ENCODE measurements at regions of chr1 and their contacts with region 1.

Region 1: GRCh38 chr1:40774266-40774998 is 9.2 kb upstream of the KCNQ4 start:
- DNase-seq: peak; percentile 37
- H3K4me3 ChIP-seq: no peak overlapping the region
- H3K27ac ChIP-seq: no peak overlapping the region
- H3K4me1 ChIP-seq: no peaks in the 10 kb centered on the region
- H3K27me3 ChIP-seq: no peaks in the 10 kb centered on the region
- CTCF ChIP-seq: peak; percentile 72 to 85
- POLR2A ChIP-seq: no peak

Region 2: GRCh38 chr1:40612345-40612831 is 162.0 kb before region 1 on chr1:
- CTCF ChIA-PET with region 1: interaction called, 3 read pairs
- POLR2A ChIA-PET with region 1: no interaction called
- dilution Hi-C with region 1: no loop called
- intact Hi-C with region 1: loop called (anchors 5 kb)
- DNase-seq: peak; percentile 71
- H3K4me3 ChIP-seq: no peak overlapping the region
- H3K27ac ChIP-seq: no peak overlapping the region
- H3K4me1 ChIP-seq: no peaks in the 10 kb centered on the region
- H3K27me3 ChIP-seq: peaks cover 1 to 11% of the 10 kb centered on the region in 2 experiments
- CTCF ChIP-seq: peak; percentile 75 to 81
- POLR2A ChIP-seq: no peak

Region 3: DNA sequence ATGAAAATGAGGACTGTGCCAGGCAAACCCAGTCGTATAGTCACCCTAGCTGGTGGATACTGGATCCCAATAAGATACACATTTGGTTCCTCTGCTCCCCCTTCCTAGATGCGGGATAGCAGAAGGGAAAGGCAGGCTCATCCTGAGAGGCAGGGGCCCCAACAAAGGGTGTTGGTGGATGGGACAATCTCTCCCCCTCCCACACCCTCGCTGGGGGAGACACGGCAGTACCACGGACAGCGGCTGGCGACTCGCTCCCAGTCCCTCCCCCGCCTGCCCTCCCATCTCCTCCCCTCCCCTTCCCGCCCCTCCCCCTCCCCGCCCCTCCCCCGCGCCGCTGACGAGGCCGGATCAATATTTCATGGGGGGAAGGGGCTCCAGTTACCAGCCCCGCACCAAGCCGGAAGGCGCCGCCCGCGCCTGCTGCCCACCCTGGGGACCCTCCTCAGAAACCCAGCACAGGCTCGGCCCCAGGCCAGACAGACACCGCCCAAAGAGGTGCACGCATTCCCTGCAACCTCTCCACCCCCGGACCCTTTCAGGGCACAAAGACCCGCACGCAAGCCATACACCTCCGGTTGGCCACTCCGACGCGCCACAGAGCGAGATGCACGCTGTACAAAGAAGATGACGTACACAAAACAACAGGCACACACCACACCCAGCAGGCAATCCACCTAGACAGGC is 120.4 kb before region 1 on chr1:
- CTCF ChIA-PET with region 1: no interaction called
- POLR2A ChIA-PET with region 1: no interaction called
- dilution Hi-C with region 1: no loop called
- intact Hi-C with region 1: no loop called
- DNase-seq: no peak
- H3K4me3 ChIP-seq: no peak overlapping the region
- H3K27ac ChIP-seq: no peak overlapping the region
- H3K4me1 ChIP-seq: no peaks in the 10 kb centered on the region
- H3K27me3 ChIP-seq: peaks cover 3 to 22% of the 10 kb centered on the region in 2 experiments
- CTCF ChIP-seq: no peak
- POLR2A ChIP-seq: no peak

Region 4: GRCh38 chr1:40745176-40745575 is 29.3 kb before region 1 on chr1:
- CTCF ChIA-PET with region 1: interaction called, 14 read pairs
- POLR2A ChIA-PET with region 1: no interaction called
- dilution Hi-C with region 1: no loop called
- intact Hi-C with region 1: no loop called
- DNase-seq: no peak
- H3K4me3 ChIP-seq: no peak overlapping the region
- H3K27ac ChIP-seq: no peak overlapping the region
- H3K4me1 ChIP-seq: no peaks in the 10 kb centered on the region
- H3K27me3 ChIP-seq: no peaks in the 10 kb centered on the region
- CTCF ChIP-seq: no peak
- POLR2A ChIP-seq: no peak

Region 5: DNA sequence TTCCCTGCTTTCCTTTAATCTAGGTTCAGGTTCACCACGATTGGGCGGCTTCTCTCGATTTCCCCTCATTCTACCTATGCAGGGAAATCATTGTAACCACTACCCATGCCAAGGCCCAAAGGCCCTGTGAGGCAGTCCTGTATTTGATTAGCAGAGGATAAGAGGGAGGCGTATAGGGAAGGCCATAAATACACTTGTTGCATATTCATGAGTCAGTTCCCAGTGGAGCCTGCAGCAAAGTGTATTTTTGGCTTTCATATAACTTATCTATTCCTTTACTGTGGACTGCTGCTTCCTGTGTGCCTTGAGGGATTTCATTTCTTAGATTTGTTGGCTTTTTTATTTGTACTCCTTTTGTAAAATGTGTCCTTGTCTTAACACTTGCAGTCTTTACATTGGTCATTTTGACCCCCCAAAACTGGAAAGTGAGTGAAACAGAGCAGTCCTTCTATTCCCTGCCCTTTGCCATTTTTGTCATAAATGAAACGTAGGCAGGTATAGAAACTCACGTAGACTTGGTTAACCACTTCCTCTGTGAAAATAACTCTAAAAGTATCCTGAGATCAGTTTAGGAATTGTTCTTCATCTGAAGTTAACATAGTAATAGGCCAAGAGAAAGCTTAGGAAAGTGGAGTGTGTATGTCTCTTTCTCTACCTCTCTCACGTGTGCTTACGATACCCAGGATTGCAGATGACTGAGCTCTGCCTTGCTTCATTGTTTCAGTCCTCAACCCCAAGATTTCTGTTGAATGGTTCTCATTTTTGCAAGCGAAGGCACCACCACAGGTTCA is 10.5 kb before region 1 on chr1:
- CTCF ChIA-PET with region 1: interaction called, 53 read pairs
- POLR2A ChIA-PET with region 1: no interaction called
- dilution Hi-C with region 1: no loop called
- intact Hi-C with region 1: no loop called
- DNase-seq: no peak
- H3K4me3 ChIP-seq: no peak overlapping the region
- H3K27ac ChIP-seq: no peak overlapping the region
- H3K4me1 ChIP-seq: no peaks in the 10 kb centered on the region
- H3K27me3 ChIP-seq: no peaks in the 10 kb centered on the region
- CTCF ChIP-seq: no peak
- POLR2A ChIP-seq: no peak

Region 6: GRCh38 chr1:40799351-40799867 is 25.0 kb after region 1 on chr1:
- CTCF ChIA-PET with region 1: interaction called, 21 read pairs
- POLR2A ChIA-PET with region 1: no interaction called
- dilution Hi-C with region 1: no loop called
- intact Hi-C with region 1: no loop called
- DNase-seq: peak; percentile 16
- H3K4me3 ChIP-seq: no peak overlapping the region
- H3K27ac ChIP-seq: no peak overlapping the region
- H3K4me1 ChIP-seq: peaks cover 14% of the 10 kb centered on the region
- H3K27me3 ChIP-seq: no peaks in the 10 kb centered on the region
- CTCF ChIP-seq: no peak
- POLR2A ChIP-seq: no peak

Region 7: GRCh38 chr1:40849801-40850592 is 75.6 kb after region 1 on chr1:
- CTCF ChIA-PET with region 1: interaction called, 58 read pairs
- POLR2A ChIA-PET with region 1: no interaction called
- dilution Hi-C with region 1: no loop called
- intact Hi-C with region 1: loop called (anchors 1 kb)
- DNase-seq: peak; percentile 60
- H3K4me3 ChIP-seq: no peak overlapping the region
- H3K27ac ChIP-seq: no peak overlapping the region
- H3K4me1 ChIP-seq: peaks cover 3% of the 10 kb centered on the region
- H3K27me3 ChIP-seq: peaks cover 14 to 17% of the 10 kb centered on the region in 2 experiments
- CTCF ChIP-seq: peak; percentile 80 to 86
- POLR2A ChIP-seq: no peak